ENCODE measurements at regions of chr6 and their contacts with region 1.

Region 1: DNA sequence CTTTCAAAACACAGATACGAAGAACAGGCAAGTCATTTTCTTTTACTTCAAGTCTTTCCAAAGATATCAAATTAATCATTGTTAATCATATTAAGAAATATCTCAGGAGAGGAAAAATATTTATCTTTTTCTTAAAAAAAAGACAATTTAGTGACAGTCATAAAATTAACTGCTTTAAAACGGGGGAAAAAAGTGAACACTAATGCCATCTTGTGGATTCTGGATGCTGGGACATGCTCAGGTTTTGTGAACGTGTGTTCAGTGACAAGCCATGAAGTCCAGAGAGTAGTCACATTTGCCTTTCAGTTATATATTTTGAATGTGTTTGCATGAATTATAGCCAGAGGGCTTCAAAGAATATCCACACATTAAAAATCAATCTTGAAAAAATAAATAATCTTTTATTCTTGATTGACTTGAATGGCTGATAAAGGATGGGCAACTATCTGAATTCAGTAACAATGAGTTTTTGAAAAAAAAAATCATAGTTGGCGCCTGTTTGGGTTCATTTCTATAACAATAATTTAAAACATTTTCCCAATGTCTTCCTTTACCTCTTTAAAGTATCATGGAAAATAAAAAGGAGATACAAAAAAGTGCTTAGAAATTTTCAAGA is 74.7 kb upstream of the NOX3 start:
- DNase-seq: no peak
- ATAC-seq: peak; percentile 64
- H3K4me3 ChIP-seq: no peak overlapping the region
- H3K27ac ChIP-seq: no peak overlapping the region
- H3K4me1 ChIP-seq: no peaks in the 10 kb centered on the region
- H3K27me3 ChIP-seq: no peaks in the 10 kb centered on the region
- CTCF ChIP-seq: peak; percentile 70

Region 2: GRCh38 chr6:155273431-155273830 is 256.9 kb before region 1 on chr6:
- intact Hi-C with region 1: no loop called
- DNase-seq: no peak
- ATAC-seq: no peak
- H3K4me3 ChIP-seq: no peak overlapping the region
- H3K27ac ChIP-seq: no peak overlapping the region
- H3K4me1 ChIP-seq: no peaks in the 10 kb centered on the region
- H3K27me3 ChIP-seq: no peaks in the 10 kb centered on the region
- CTCF ChIP-seq: no peak

Region 3: GRCh38 chr6:155314773-155315515 is 215.4 kb before region 1 on chr6:
- intact Hi-C with region 1: no loop called
- DNase-seq: peak; percentile 71
- ATAC-seq: peak; percentile 71
- H3K4me3 ChIP-seq: peak overlapping the region; percentile 78
- H3K27ac ChIP-seq: peak overlapping the region; percentile 90
- H3K4me1 ChIP-seq: peaks cover 9% of the 10 kb centered on the region
- H3K27me3 ChIP-seq: no peaks in the 10 kb centered on the region
- CTCF ChIP-seq: no peak

Region 4: DNA sequence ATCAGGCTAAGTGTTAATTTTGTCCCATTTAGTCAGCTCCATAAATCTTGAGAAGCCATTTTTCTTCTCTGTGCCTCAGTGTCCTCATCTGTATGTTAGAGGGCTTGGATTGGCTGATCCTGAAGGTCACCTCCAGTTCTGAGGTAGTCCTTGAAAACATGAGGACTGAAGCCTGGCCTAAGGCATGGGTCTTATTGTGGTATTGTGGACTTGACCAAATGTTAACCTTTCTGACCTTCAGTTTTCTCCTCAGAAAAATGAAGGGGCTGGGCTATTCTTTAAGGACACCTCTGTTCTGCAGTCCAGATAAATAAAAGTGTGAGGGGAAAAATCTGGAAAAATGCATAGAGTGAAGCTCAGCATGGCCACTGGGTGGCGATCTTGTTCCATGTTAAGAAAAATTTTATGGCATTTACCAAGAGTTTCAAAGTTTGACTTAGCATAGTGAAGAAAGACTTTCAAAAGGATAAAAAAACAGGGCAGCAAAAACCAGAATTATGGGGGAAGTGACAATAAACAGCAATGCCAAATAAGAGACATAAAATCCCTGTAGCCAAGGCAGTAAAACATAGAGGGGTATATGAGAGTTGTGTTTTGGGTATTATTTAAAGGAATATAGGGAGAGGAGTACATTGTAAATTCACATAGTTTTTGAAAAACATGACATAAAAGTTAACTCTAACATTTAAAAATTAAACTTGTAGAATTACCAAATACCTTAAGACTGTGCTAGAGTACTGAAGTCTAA is 202.8 kb before region 1 on chr6:
- intact Hi-C with region 1: loop called (anchors 5 kb)
- DNase-seq: no peak
- ATAC-seq: peak; percentile 84
- H3K4me3 ChIP-seq: no peak overlapping the region
- H3K27ac ChIP-seq: peak overlapping the region; percentile 31
- H3K4me1 ChIP-seq: peaks cover 4% of the 10 kb centered on the region
- H3K27me3 ChIP-seq: no peaks in the 10 kb centered on the region
- CTCF ChIP-seq: peak; percentile 86